Activated naive CD4-positive, alpha-beta T cell treated with anti-CD3 and anti-CD28 coated beads for 36 hours (primary cell): ENCODE measurements at regions of chr7 and their contacts with region 1.

Region 1: DNA sequence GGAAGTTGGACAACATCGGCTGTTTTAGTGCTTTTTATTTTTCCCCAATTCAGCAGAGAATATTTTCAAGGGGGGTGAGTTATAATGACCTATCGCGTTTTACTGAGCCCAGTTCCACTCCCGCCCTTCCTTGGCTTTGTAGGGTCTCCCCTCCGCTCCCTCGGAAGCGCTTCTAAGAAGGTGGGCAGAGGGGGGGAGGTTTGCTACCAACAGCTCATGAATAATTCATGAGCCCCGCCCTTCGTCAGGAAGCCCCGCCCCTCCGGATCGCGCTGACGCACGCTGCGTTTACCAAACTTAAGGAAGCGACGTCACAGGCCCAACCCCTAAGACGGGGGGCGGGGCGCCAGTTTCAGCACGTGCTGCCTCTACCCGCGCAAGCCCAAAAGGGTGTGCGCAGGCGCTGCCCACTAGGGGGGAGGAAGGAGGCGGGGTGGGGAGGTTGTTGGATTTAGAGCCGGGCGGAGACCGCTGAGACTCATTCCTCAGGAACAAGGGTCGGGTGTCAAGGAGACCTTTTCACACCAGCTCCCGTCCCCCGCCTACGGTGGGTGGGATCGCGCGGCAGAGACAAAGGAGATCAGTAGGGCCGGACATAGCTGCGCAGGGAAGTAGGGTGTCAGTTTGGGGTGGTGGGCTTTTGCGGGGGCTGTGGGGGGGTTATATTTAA is 529 bp upstream of the MEPCE start:
- DNase-seq: peak; percentile 100
- H3K4me3 Mint-ChIP-seq: peak overlapping the region; percentile 93
- H3K27ac Mint-ChIP-seq: peak overlapping the region; percentile 99
- H3K4me1 Mint-ChIP-seq: peaks cover 47% of the 10 kb centered on the region
- H3K27me3 Mint-ChIP-seq: peaks cover 5% of the 10 kb centered on the region

Region 2: DNA sequence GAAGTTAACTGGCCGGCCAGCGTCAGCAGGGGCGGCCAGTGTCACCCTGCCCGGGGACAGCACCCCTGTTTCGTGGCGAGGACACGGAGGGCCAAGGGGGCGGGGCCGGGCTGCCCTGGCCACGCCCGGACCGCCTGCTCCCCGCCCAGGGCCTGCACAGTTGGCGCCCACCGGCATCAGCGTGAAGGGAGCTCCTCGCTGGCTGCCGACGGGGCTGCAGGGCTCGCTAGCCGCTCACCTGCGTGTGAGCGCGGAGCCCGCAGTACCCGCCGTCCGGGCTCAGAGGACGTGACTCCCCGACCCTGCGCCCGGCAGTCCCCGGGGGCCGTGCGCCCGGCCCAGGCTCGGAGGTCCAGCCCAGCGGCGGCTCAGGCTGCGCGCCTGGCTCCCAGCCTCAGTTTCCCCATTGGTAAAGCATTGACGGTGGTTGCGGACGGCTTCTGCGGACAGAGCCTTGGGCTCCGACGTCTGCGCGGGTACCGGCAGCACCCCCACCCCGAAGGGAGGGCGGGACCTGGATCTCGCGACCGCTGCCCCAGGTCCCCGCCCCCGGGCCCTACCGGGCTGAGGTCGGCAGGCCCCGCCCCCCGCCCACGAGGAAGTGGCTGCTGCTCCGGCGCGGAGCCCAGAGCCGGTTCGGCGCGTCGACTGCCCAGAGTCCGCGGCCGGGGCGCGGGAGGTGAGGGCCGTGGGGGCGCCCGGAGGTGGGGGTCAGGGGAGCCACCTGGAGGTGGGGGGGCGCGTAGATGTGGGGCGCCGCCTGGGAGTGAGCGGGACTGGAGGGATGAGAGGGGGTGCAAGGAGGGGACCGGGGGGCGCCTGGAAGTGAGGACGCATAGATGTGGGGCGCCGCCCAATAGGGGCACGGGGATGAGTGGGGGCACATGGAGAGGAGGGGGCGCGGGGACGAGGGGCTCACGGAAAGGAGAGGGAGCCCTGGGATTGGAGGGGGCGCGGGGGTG is 1054.7 kb before region 1 on chr7 and contains the start of gene ARPC1B:
- CTCF ChIA-PET with region 1: no interaction called
- intact Hi-C with region 1: no loop called
- DNase-seq: peak; percentile 88
- H3K4me3 Mint-ChIP-seq: peak within 1 kb of the TSS; percentile 79
- H3K27ac Mint-ChIP-seq: peak within 1 kb of the TSS; percentile 87
- H3K4me1 Mint-ChIP-seq: peaks cover 24% of the 10 kb centered on the region
- H3K27me3 Mint-ChIP-seq: no peaks in the 10 kb centered on the region
- total RNA-seq, gene ARPC1B: 334 to 345 TPM

Region 3: DNA sequence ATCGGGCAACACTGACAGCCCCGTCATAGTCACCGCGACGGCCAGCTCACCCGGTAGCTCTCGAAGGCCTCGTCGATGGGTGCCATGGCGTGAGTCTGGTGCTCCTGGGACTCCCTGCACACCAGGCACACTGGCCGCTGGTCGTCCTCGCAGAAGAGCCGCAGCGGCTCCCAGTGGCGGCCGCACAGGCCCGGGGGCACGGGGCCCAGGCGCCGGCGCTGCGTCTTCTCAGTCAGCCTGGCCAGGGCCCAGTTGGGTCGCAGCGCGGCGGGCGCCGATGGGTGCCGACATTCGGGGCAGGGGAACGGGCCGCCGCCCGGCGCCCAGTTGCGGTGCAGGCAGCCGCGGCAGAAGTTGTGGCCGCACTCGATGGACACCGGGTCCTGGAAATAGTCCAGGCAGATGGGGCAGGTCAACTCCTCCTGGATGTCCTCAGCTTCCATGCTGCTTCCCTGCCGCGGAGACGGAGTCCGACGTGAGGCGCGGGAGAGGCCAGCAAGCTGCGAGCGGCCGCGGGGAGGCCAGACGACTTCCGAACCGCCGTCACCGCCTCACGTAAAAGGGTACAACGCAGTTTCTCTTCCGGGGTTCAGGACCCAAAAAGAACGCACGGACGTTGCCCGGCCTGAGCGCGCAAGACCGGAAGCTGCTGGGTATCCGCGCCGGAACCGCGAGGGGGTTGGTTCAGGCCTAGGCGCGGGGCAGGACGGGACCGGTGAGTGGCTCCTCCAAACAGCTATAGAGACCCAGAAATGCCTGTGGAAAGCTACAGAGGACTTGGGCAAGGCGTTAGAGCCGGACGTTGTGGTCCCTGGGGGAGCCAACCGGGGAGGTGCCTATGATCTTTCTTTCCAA is 509.9 kb before region 1 on chr7 and contains the start of gene TRIM4:
- CTCF ChIA-PET with region 1: no interaction called
- intact Hi-C with region 1: loop called (anchors 2 kb)
- DNase-seq: peak; percentile 96
- H3K4me3 Mint-ChIP-seq: peak within 1 kb of the TSS; percentile 90
- H3K27ac Mint-ChIP-seq: peak within 1 kb of the TSS; percentile 93
- H3K4me1 Mint-ChIP-seq: peaks cover 38% of the 10 kb centered on the region
- H3K27me3 Mint-ChIP-seq: no peaks in the 10 kb centered on the region
- total RNA-seq, gene TRIM4: 25.7 to 25.8 TPM

Region 4: DNA sequence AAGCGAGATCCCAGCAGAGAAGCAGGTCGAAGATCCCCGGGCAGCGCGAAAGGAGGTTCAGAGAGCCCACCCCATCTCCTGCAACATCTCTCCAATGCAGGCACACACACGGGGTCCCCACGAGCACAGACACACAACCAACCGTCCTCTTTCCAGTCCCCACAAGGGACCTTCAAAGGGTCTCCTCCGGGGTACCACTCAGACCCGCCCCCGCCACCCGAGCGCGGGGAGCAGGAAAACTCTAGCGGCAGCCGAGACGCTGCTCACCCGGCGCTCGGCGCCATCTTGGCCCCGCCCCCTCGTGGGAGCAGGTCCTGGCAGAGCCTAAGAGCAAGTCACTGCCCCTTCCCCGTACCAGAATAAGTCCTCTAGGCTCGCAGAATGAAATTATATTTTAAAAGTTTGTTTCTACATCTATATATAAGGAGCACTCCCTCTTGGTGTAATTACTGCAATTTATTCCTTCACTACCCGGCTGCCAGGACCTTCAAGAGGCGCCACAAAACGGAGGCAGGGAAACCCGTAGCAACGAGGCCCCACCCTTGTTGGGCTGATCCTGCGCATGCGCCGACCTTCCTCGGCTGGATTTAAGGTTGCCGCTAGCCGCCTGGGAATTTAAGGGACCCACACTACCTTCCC is 309.9 kb before region 1 on chr7 and contains the starts of genes CNPY4 and TAF6:
- CTCF ChIA-PET with region 1: no interaction called
- intact Hi-C with region 1: loop called (anchors 1 kb)
- DNase-seq: peak; percentile 96
- H3K4me3 Mint-ChIP-seq: peak within 1 kb of the TSS; percentile 93
- H3K27ac Mint-ChIP-seq: peak within 1 kb of the TSS; percentile 95
- H3K4me1 Mint-ChIP-seq: peaks cover 17% of the 10 kb centered on the region
- H3K27me3 Mint-ChIP-seq: no peaks in the 10 kb centered on the region
- total RNA-seq, gene CNPY4: 7.2 to 8.7 TPM
- total RNA-seq, gene TAF6: 48.9 to 53.5 TPM

Region 5: DNA sequence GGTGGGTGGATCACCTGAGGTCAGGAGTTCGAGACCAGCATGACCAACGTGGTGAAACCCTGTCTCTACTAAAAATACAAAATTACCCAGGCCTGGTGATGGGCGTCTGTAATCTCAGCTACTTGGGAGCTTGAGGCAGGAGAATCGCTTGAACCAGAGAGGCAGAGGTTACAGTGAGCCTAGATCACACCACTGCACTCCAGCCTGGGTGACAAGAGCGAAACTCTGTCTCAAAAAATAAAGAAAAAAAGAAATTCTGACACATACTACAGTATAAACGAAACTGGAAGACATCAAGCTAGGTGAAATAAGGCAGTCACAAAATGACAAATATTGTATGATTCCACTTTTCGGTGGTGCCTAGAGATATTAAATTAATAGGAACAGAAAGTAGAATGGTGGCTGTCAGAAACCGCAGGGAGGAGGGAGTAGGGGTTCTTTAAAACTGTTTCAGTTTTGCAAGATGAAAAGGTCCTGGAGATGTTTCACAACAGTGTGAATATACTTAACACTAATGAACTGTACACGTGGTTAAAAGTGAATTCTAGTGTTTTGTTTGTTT is 32.6 kb before region 1 on chr7:
- CTCF ChIA-PET with region 1: no interaction called
- intact Hi-C with region 1: loop called (anchors 1 kb)
- DNase-seq: peak; percentile 85
- H3K4me3 Mint-ChIP-seq: no peak overlapping the region
- H3K27ac Mint-ChIP-seq: no peak overlapping the region
- H3K4me1 Mint-ChIP-seq: peaks cover 28% of the 10 kb centered on the region
- H3K27me3 Mint-ChIP-seq: peaks cover 19% of the 10 kb centered on the region

Region 6: DNA sequence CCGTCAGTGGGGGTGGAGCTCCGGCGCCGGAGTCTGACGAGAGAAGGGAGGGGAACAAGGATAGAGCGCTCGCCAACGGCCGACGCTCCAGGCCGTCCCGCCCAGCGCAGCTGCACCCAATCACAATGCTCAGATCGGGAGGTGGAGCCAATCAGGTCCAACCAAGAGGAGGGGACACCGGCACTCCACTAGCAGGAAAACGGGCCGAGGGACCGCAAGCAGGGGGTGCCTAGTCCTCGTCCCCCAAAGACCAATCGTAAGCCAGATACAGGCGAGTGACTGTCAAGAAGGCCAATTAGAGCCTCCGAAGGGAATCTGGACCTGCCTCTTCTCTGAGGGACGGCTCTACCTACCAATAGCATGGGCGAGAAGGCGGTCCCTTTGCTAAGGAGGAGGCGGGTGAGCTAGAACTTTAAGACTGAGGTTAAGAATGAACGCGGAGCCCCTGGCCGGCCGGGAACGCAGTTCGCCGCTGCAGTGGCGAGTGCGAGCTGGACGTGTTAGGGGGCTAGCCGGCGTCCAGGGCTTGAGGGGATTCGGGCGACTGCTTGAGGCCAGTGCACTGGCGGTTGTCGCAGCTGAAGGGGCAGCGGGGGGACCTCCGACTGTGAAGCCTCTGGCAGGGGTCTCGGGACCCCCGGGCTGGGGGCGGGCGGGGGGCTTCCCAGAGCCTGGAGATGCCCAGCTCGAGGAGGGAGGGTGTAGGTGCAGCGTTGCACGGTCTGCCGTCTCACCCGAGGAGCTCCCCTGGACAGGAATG is 157.3 kb after region 1 on chr7 and contains the start of gene FBXO24:
- CTCF ChIA-PET with region 1: interaction called, 4 read pairs
- intact Hi-C with region 1: loop called (anchors 1 kb)
- DNase-seq: peak; percentile 100
- H3K4me3 Mint-ChIP-seq: peak within 1 kb of the TSS; percentile 89
- H3K27ac Mint-ChIP-seq: peak within 1 kb of the TSS; percentile 97
- H3K4me1 Mint-ChIP-seq: peaks cover 27% of the 10 kb centered on the region
- H3K27me3 Mint-ChIP-seq: peaks cover 7% of the 10 kb centered on the region
- total RNA-seq, gene FBXO24: 1.5 to 2.6 TPM

Region 7: GRCh38 chr7:100705753-100706671 is 276.9 kb after region 1 on chr7 and contains the start of gene POP7:
- CTCF ChIA-PET with region 1: interaction called, 3 read pairs
- intact Hi-C with region 1: loop called (anchors 2 kb)
- DNase-seq: peak; percentile 99
- H3K4me3 Mint-ChIP-seq: peak within 1 kb of the TSS; percentile 96
- H3K27ac Mint-ChIP-seq: peak within 1 kb of the TSS; percentile 89
- H3K4me1 Mint-ChIP-seq: peaks cover 15% of the 10 kb centered on the region
- H3K27me3 Mint-ChIP-seq: peaks cover 4% of the 10 kb centered on the region
- total RNA-seq, gene POP7: 23.2 to 29.6 TPM